ENCODE measurements at regions of chr7 and their contacts with region 1.

Region 1: DNA sequence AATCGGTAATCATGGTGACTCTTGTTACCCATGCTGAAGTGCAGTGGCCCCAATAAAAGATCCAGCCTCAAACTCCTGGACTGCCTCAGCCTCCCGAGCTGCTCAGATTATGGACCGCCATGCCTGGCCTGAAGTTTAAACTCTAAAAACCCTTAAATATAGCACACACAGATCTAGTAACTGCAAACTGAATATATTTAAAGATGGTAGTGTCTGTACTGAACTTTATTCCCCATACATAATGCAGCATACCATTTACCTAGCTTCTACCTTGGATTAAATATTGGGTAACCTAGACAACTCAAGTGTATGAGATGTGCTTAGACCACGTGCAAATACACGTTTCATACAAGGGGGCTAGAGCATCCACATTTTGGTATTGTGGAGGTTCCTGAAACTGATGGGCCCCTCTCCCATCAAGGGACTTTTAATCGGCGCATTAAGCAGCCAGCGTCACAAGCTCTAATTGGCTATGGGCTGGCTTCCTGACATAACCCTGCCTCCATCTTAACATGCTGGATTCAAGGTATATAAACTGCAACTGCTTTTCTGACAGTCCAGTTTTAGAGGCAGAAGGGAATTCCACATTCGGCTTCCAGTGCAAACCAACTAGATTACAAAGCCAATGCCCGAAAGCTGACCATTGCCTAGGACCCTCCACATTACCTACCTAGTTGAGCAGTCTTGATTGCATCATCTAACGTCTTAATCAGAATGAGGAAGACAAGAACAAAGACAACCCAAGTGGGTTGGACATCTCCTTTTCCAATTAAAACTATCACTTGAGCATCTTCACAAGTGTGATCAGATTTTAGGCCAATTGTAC is 13.0 kb downstream of the HNRNPA2B1 start:
- DNase-seq: no peak
- ATAC-seq: peak; percentile 36
- H3K4me3 Mint-ChIP-seq: no peak overlapping the region
- H3K27ac Mint-ChIP-seq: peak overlapping the region; percentile 97
- H3K4me1 Mint-ChIP-seq: peaks cover 55% of the 10 kb centered on the region
- H3K27me3 Mint-ChIP-seq: no peaks in the 10 kb centered on the region
- CTCF ChIP-seq: no peak

Region 2: GRCh38 chr7:26101361-26102151 is 86.0 kb before region 1 on chr7:
- CTCF ChIA-PET with region 1: interaction called, 4 read pairs
- POLR2A ChIA-PET with region 1: interaction called, 11 read pairs
- DNase-seq: peak; percentile 37
- ATAC-seq: peak; percentile 75
- H3K4me3 Mint-ChIP-seq: peak overlapping the region; percentile 35
- H3K27ac Mint-ChIP-seq: peak overlapping the region; percentile 75
- H3K4me1 Mint-ChIP-seq: peaks cover 34% of the 10 kb centered on the region
- H3K27me3 Mint-ChIP-seq: no peaks in the 10 kb centered on the region; the same call in 1 of the 2 replicates
- CTCF ChIP-seq: no peak

Region 3: GRCh38 chr7:26151953-26152781 is 35.4 kb before region 1 on chr7 and contains the start of gene NFE2L3:
- CTCF ChIA-PET with region 1: interaction called, 9 read pairs
- POLR2A ChIA-PET with region 1: interaction called, 18 read pairs
- DNase-seq: peak; percentile 73
- ATAC-seq: peak; percentile 69
- H3K4me3 Mint-ChIP-seq: peak within 1 kb of the TSS; percentile 89
- H3K27ac Mint-ChIP-seq: peak within 1 kb of the TSS; percentile 98
- H3K4me1 Mint-ChIP-seq: peaks cover 62% of the 10 kb centered on the region
- H3K27me3 Mint-ChIP-seq: peaks cover 4% of the 10 kb centered on the region
- CTCF ChIP-seq: no peak
- total RNA-seq, gene NFE2L3: 66.8 to 68.6 TPM (median 68.5 TPM) in 3 replicates

Region 4: GRCh38 chr7:26200444-26201246 is 13.1 kb after region 1 on chr7 and contains the start of gene HNRNPA2B1:
- CTCF ChIA-PET with region 1: interaction called, 6 read pairs
- POLR2A ChIA-PET with region 1: interaction called, 35 read pairs
- DNase-seq: peak; percentile 93
- ATAC-seq: peak; percentile 84
- H3K4me3 Mint-ChIP-seq: peak within 1 kb of the TSS; percentile 100
- H3K27ac Mint-ChIP-seq: peak within 1 kb of the TSS; percentile 100
- H3K4me1 Mint-ChIP-seq: peaks cover 42% of the 10 kb centered on the region
- H3K27me3 Mint-ChIP-seq: peaks cover 3% of the 10 kb centered on the region
- CTCF ChIP-seq: no peak
- total RNA-seq, gene HNRNPA2B1: 1,081 to 1,101 TPM (median 1,097 TPM) in 3 replicates